Activated CD4-positive, alpha-beta T cell treated with anti-CD3 and anti-CD28 coated beads for 36 hours (primary cell): ENCODE measurements at regions of chr1 and their contacts with region 1.

Region 1: DNA sequence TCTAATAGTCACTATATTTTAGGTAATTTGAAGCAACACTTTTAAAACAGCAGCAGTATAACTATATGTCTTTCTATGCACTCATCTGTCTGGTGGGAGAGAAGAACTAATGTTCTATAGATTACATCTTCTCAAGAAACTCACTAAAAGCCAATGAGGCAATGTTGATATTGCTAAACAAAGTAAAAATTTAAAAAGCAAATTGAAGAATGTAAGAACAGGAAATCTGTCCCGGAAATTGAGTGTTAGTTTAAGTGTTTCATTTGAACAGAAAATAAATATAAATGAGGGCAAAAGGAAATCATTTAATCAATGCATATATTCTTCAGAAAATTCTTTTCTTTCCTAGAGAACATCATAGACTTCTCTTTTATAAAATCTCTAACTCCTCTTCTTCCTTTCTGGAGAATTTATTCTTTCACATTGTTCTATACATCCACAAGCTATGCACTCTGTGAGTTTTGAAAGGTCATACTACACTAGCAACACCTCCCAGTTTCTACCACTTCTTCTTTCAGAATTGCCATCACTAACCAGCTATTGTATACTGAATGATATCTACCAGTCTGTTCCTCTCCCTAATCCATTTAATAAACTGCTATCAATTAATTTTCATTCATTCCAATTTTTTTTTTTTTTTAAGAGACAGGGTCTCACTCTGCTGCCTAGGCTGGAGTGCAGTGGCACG is 153.0 kb downstream of the USH2A start:
- DNase-seq: no peak
- ATAC-seq: no peak
- H3K4me3 Mint-ChIP-seq: no peak overlapping the region
- H3K27ac Mint-ChIP-seq: no peak overlapping the region
- H3K4me1 Mint-ChIP-seq: no peaks in the 10 kb centered on the region
- H3K27me3 Mint-ChIP-seq: no peaks in the 10 kb centered on the region

Region 2: DNA sequence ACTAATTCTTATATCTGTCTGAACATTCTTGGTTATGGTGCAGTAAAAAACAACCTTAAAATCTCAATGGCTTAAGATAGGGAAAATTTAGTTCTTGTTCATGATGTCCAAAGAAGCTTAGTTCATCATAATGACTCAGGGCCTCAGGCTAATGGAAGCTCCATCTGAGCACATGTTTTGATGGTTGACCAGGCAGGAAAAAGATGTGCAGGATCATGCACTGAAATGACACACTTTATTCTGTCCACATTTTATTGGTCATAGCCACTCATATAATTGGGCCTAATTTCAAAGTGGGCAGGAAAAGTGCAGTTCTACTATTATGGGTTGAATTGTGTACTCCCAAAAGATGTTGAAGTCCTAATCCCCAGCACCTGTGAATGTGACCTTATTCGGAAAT is 1469.0 kb before region 1 on chr1:
- CTCF ChIA-PET with region 1: no interaction called
- POLR2A ChIA-PET with region 1: no interaction called
- intact Hi-C with region 1: no loop called
- DNase-seq: no peak
- ATAC-seq: no peak
- H3K4me3 Mint-ChIP-seq: no peak overlapping the region
- H3K27ac Mint-ChIP-seq: no peak overlapping the region
- H3K4me1 Mint-ChIP-seq: no peaks in the 10 kb centered on the region
- H3K27me3 Mint-ChIP-seq: peaks cover 3% of the 10 kb centered on the region

Region 3: DNA sequence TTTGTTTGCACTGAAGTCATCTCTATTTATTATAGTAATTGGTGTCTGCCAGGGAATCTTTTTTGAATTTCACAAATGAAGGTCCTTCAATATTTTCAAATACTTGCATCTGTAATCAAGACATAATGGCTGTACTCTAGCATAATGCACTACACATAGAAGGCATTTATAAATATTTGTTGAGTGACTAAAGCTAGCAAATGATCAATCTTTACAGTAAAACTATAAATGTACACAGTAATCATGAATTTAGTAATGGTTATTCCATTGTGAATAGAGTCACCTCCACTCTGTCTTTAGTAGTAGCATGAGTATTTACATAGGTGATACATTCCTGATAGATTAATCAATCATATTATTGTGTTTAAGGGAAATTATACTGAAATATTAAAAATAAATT is 33.5 kb after region 1 on chr1:
- CTCF ChIA-PET with region 1: no interaction called
- POLR2A ChIA-PET with region 1: no interaction called
- intact Hi-C with region 1: no loop called
- DNase-seq: no peak
- ATAC-seq: no peak
- H3K4me3 Mint-ChIP-seq: no peak overlapping the region
- H3K27ac Mint-ChIP-seq: no peak overlapping the region
- H3K4me1 Mint-ChIP-seq: no peaks in the 10 kb centered on the region
- H3K27me3 Mint-ChIP-seq: no peaks in the 10 kb centered on the region

Region 4: DNA sequence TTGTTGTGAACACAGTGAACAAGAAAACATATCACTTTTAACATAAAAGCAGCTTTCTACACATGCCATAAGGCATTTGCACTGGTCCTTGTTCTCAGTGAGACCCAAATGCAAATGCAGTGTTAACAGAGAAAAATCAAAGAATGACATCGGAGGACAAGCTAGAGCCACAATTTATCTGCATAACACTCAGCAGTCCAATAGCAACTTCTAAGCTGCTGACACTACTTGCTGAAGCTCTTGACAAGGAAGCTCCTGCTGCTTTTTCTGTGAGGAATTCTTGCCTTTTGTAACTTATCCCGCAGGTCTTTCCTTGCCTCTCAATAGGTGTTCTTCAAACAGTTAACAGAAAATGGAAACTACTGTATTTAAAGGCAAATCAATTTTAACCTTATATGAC is 118.3 kb after region 1 on chr1:
- CTCF ChIA-PET with region 1: no interaction called
- POLR2A ChIA-PET with region 1: no interaction called
- intact Hi-C with region 1: no loop called
- DNase-seq: no peak
- ATAC-seq: no peak
- H3K4me3 Mint-ChIP-seq: no peak overlapping the region
- H3K27ac Mint-ChIP-seq: no peak overlapping the region
- H3K4me1 Mint-ChIP-seq: no peaks in the 10 kb centered on the region
- H3K27me3 Mint-ChIP-seq: no peaks in the 10 kb centered on the region

Region 5: GRCh38 chr1:218025454-218025853 is 1755.2 kb after region 1 on chr1:
- CTCF ChIA-PET with region 1: no interaction called
- POLR2A ChIA-PET with region 1: no interaction called
- intact Hi-C with region 1: loop called in 1 of 2 experiments (anchors 5 kb)
- DNase-seq: no peak
- ATAC-seq: no peak
- H3K4me3 Mint-ChIP-seq: no peak overlapping the region
- H3K27ac Mint-ChIP-seq: no peak overlapping the region
- H3K4me1 Mint-ChIP-seq: no peaks in the 10 kb centered on the region
- H3K27me3 Mint-ChIP-seq: no peaks in the 10 kb centered on the region